AG04449 (cell line): ENCODE measurements at regions of chr2 and their contacts with region 1.

Region 1: GRCh38 chr2:102166189-102166845 is 20.5 kb upstream of the IL1RL2 start:
- DNase-seq: peak; percentile 42
- H3K4me3 ChIP-seq: no peak overlapping the region
- CTCF ChIP-seq: peak; percentile 56

Region 2: DNA sequence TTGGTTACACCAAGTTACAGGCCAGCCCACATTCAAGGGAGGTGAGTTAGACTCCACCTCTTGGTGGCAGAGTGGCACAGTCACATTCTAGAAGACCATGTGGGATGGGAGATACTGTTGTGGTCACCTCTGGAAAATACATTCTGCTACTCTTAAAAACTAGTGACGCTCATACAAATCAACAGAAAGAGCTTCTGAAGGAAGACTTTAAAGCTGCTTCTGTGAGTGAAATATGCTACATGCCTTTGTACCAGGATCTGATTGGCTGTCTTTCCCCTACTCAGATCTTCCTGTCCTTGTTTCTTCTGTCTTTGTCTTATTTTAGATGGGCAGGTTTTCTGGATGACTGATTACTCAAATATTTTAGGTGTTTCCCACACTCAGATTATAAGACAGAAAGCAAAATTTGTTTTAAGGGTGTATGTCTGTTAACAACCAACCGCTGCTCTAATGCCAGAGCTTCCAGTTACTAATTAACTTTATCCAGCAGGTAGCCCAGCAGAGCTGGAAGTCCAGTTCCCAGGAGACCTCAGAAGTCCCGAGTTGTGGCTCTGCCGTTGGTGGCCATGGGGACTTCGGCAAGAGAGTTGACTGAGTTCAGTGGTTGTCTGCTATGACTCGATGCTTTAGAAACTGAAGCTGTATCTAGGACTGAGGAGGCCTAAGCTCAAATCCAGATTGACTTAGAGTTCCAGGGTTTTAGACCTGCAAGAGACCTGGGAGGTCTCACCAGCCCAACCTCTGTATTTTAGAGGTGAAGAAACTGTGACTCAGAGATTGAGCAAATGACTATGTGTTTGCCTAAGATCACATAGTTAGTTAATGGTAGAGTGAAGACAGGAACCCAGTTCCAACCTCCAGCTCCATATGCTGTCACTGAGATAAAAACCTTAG is 167.2 kb before region 1 on chr2:
- CTCF ChIA-PET with region 1: interaction called, 70 read pairs
- POLR2A ChIA-PET with region 1: no interaction called
- DNase-seq: no peak
- H3K4me3 ChIP-seq: no peak overlapping the region
- CTCF ChIP-seq: no peak

Region 3: DNA sequence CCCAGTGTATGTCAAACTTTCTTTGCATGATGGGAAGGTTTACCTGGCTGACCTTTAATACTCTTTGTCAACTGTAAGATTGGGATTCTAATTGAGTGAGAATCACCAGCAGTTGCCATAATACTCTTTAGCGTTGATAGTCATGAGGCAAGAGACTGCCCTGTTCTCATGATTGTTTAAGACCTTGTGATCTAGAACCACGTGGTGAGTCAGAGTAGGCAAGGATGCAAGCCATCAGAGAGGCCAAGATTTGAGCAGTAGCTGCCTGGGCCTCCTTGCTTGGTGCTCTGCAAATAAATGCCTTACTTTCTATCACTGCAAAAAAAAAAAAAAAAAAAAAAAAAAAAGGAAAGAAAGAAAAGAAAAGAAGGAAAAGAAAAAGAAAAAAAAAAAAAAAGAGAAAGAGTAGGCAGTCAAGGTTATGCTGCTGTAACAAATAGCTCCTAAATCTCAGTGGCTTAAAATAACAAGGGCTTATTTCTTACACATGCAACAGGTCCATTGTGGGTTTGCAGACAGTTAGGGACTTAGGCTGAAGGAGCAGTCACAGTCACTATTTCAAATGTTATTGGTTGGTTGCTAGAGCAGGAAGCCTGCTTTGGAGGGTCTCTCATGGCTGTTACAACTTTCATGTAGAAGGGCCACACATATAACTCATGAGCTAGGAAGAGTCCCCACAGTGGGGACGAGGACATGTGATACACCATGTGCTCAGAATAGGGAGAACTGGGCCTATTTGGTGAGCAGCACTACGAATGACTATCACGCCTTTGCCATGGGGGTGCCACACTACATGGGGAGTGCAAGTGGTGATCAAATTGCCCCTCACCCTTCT is 152.9 kb before region 1 on chr2:
- CTCF ChIA-PET with region 1: interaction called, 70 read pairs
- POLR2A ChIA-PET with region 1: no interaction called
- DNase-seq: no peak
- H3K4me3 ChIP-seq: no peak overlapping the region
- CTCF ChIP-seq: no peak

Region 4: DNA sequence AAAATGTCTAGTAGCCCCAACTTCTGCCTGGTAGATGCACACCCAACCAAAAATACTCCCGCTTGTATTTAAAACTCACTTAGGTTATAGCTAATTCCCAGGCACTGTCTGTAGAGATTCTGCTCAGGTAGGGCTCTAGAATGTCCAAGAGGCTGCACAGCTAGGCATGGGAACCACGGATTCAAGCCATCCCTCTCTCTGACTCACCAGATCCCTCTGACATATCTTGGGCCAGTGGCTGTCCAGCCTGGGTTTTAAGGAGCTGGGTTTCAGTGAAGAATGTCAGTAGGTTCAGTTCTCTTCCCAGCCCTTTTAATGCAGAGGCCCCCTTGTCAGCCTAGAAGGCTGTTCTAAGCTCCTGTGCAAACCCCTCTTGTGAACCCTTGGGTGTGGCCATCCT is 39.7 kb before region 1 on chr2:
- CTCF ChIA-PET with region 1: interaction called, 10 read pairs
- POLR2A ChIA-PET with region 1: no interaction called
- DNase-seq: no peak
- H3K4me3 ChIP-seq: no peak overlapping the region
- CTCF ChIP-seq: no peak

Region 5: GRCh38 chr2:102177814-102178478 is 11.6 kb after region 1 on chr2:
- CTCF ChIA-PET with region 1: interaction called, 32 read pairs
- POLR2A ChIA-PET with region 1: no interaction called
- DNase-seq: no peak
- H3K4me3 ChIP-seq: no peak overlapping the region
- CTCF ChIP-seq: no peak